Dendritic cell treated with granulocyte-macrophage colony-stimulating factor and Interleukin-4, amounts not matched to agents 40 ng/mL and 50 ng/mL, for 4 days (primary cell): ENCODE measurements at regions of chr10 and their contacts with region 1.

Region 1: DNA sequence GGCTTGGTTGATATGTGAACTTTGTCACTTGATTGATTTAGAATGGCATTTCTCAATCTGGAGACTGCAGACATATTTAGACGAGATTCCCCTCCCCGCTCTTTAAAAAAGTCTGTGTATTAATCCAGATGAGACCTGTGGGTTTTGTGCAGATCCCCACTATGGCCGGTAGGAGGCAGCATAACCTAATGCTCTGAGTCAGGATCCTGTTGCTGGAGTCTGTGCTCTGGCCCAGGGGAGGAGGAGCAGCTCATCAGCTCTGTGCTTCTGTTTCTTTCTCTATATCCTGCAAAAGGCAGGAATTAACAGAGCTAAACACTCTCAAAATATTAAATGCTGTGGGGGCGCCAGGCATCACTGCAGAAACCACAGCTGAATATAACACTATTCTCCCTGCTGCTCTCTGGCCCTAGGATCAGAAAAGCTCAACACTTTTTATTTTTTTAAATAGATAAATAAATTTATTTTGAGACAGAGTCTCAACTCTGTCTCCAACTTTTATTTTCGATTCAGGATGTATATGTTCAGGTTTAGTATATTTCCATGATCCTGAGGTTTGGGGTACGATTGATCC is 23.9 kb upstream of the SEPHS1 start:
- H3K4me3 Mint-ChIP-seq: no peak overlapping the region
- H3K27ac Mint-ChIP-seq: no peak overlapping the region
- H3K4me1 Mint-ChIP-seq: no peaks in the 10 kb centered on the region
- H3K27me3 Mint-ChIP-seq: peaks cover 5% of the 10 kb centered on the region

Region 2: GRCh38 chr10:13139150-13139549 is 232.8 kb before region 1 on chr10:
- intact Hi-C with region 1: no loop called
- H3K4me3 Mint-ChIP-seq: no peak overlapping the region
- H3K27ac Mint-ChIP-seq: no peak overlapping the region
- H3K4me1 Mint-ChIP-seq: no peaks in the 10 kb centered on the region
- H3K27me3 Mint-ChIP-seq: no peaks in the 10 kb centered on the region

Region 3: DNA sequence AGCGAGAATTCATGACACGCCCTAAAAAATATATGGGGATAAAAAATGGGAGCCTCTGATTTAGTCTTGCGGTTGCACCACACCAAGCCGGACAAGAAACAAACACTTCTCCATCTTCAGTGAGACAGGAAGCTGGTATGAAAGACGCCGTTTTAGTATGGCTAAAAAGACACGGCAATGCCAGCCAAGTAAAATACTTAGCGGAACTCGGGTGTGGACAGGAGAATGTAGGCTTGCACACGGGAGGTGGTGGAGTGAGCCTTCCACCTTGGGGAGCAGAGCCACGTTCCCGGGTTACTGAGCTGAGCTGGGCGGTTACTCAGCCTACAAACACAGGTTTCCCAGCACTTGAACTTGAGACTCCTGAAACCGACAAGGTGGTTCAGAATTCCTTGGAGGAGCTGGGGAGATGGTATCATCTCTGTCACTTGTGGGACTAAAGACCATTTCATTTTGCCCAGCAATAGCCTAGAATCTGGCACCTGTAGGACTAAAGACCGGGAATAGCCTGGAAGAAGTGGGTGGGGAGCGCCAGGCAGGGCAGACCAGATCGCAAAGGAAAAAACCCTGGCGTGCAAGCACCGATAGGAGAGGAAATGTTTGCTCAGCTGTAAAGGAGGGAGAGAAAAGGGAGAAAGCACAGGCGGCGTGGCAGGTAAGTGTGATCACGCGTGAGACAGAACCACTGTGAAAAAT is 10.9 kb after region 1 on chr10:
- intact Hi-C with region 1: no loop called
- H3K4me3 Mint-ChIP-seq: peak overlapping the region; percentile 45
- H3K27ac Mint-ChIP-seq: no peak overlapping the region
- H3K4me1 Mint-ChIP-seq: peaks cover 11% of the 10 kb centered on the region
- H3K27me3 Mint-ChIP-seq: peaks cover 43% of the 10 kb centered on the region

Region 4: GRCh38 chr10:13396369-13396768 is 24.4 kb after region 1 on chr10:
- intact Hi-C with region 1: no loop called
- H3K4me3 Mint-ChIP-seq: no peak overlapping the region
- H3K27ac Mint-ChIP-seq: no peak overlapping the region
- H3K4me1 Mint-ChIP-seq: no peaks in the 10 kb centered on the region
- H3K27me3 Mint-ChIP-seq: peaks cover 2% of the 10 kb centered on the region

Region 5: DNA sequence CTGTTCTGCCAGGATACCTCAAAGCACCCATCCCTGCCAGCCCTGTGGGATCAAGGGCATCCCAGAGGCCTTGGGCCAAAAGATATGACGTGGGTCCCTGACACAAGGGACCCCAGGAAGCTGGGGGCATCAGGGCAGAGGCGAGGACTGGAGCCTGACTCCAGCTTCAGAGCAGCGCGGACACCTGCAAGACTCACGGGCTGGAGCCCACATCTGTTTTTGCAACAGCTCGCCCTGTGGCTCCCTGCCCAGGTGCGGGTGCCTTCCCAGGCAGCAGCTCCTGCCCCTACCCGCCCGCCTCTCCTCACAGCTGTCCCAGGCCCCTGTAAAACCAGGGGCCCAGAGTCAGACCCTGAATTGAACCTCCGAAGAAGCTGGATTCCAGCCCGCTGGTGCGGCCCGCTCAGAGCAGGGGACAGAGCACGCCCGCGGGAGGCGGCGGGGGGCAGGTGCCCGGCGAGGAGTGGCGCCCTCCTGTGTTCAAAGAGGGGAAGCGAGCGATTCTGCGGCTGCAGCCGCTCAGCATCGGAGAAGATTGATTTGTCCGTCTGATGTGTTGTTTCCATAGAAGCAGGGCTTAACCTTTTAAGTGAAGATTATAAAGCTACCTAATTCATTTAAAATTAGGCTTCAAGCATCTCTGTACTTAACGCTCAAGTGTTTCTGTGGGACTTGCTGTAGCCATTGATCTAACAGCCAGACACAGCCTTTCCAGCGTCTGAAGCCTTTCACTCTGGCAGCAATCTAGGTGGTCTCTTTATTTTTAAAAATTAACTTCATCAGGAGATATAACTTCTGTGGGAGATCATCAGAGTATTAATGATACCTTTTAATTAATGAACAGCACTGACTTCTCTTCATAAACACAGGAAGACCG is 68.4 kb after region 1 on chr10:
- intact Hi-C with region 1: loop called (anchors 1 kb)
- H3K4me3 Mint-ChIP-seq: peak overlapping the region; percentile 44
- H3K27ac Mint-ChIP-seq: no peak overlapping the region
- H3K4me1 Mint-ChIP-seq: peaks cover 10% of the 10 kb centered on the region
- H3K27me3 Mint-ChIP-seq: peaks cover 46% of the 10 kb centered on the region

Region 6: DNA sequence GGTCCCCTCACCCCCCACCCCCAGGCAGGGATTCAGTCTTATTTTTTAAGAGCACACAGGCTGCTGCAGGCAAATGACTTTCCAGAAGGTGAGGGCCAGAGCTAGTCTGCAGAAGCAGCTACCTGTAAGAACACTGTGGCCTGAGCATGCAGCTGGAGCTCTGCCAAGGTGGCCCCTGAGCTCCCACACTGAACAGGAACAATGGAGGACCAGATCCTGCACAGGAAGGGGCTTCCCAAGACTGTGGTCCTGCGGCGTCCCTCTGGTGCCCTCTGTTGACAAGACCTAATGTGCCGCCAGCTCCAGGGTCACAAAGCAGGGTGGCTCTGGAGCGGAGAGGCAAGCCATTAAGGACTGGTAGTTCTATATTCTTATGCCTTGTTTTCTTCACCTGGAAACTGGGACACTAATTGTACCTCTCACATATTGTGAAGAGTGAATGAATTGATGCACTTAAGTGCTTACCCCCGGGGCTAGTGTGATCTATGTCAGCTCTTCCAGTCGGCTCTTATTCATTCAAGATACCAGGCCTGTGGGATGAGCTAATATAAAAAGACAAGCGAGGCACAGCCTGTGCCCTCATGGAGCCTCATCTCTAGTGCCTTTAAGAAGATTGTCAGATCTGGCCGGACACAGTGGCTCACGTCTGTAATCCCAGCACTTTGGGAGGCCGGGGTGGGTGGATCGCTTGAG is 164.8 kb after region 1 on chr10:
- intact Hi-C with region 1: loop called (anchors 5 kb)
- H3K4me3 Mint-ChIP-seq: no peak overlapping the region
- H3K27ac Mint-ChIP-seq: no peak overlapping the region
- H3K4me1 Mint-ChIP-seq: no peaks in the 10 kb centered on the region
- H3K27me3 Mint-ChIP-seq: peaks cover 29% of the 10 kb centered on the region

Region 7: DNA sequence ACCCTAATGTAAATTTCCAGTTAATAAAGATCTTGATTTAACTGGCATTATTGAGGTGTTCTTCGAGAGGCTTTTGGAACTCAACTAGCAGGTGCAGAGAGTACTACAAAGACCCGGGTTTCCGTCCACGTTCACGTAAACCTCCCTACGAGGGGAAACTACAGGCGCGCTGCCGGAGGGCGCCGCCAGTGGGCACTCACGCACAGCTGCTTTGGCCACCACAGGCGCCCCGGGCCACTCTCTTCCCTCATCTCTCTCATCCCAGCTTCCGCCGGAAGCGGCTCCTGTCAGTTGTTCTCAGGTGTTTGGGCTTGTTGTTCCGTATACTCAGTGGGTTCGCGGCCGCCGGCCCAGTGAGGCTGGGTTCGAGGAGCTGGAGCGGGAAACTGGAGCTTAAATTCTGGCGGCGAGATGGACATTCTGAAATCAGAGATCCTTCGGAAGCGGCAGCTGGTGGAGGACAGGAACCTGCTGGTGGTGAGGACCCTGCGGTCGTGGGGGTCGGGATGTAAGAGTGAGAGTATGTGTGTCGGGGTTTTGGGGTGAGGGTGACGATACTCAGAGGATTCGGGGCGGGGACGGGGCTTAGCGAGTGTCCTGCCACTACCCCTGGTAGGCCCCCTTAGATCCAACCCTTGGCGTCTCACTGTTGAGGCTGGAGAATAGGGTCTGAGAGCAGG is 214.8 kb after region 1 on chr10 and contains the start of gene PRPF18:
- intact Hi-C with region 1: loop called (anchors 5 kb)
- H3K4me3 Mint-ChIP-seq: peak within 1 kb of the TSS; percentile 98
- H3K27ac Mint-ChIP-seq: peak within 1 kb of the TSS; percentile 96
- H3K4me1 Mint-ChIP-seq: peaks cover 24% of the 10 kb centered on the region
- H3K27me3 Mint-ChIP-seq: peaks cover 14% of the 10 kb centered on the region